Common myeloid progenitor, CD34-positive (primary cell): ENCODE measurements at regions of chr17 and their contacts with region 1.

Region 1: GRCh38 chr17:46199379-46199778 is 6.2 kb upstream of the KANSL1 start:
- DNase-seq: no peak
- H3K4me3 ChIP-seq: no peak overlapping the region
- H3K27ac ChIP-seq: no peak overlapping the region
- H3K4me1 ChIP-seq: peaks cover 0 to 22% (median 12%) of the 10 kb centered on the region in 4 experiments
- H3K27me3 ChIP-seq: no peaks in the 10 kb centered on the region

Region 2: GRCh38 chr17:46108550-46109110 is 90.7 kb before region 1 on chr17:
- CTCF ChIA-PET with region 1: no interaction called
- POLR2A ChIA-PET with region 1: no interaction called
- DNase-seq: peak in 2 of 3 donors; percentile 22 to 24
- H3K4me3 ChIP-seq: no peak overlapping the region
- H3K27ac ChIP-seq: no peak overlapping the region
- H3K4me1 ChIP-seq: peaks cover 0 to 20% (median 2%) of the 10 kb centered on the region in 4 experiments
- H3K27me3 ChIP-seq: no peaks in the 10 kb centered on the region

Region 3: GRCh38 chr17:46212634-46213435 is 13.5 kb after region 1 on chr17:
- CTCF ChIA-PET with region 1: interaction called, 14 read pairs
- POLR2A ChIA-PET with region 1: no interaction called
- DNase-seq: peak; percentile 82 to 94 (median 91)
- H3K4me3 ChIP-seq: no peak overlapping the region
- H3K27ac ChIP-seq: no peak overlapping the region
- H3K4me1 ChIP-seq: peaks cover 0 to 12% (median 6%) of the 10 kb centered on the region in 4 experiments
- H3K27me3 ChIP-seq: no peaks in the 10 kb centered on the region